ENCODE measurements at regions of chr5 and their contacts with region 1.

Region 1: DNA sequence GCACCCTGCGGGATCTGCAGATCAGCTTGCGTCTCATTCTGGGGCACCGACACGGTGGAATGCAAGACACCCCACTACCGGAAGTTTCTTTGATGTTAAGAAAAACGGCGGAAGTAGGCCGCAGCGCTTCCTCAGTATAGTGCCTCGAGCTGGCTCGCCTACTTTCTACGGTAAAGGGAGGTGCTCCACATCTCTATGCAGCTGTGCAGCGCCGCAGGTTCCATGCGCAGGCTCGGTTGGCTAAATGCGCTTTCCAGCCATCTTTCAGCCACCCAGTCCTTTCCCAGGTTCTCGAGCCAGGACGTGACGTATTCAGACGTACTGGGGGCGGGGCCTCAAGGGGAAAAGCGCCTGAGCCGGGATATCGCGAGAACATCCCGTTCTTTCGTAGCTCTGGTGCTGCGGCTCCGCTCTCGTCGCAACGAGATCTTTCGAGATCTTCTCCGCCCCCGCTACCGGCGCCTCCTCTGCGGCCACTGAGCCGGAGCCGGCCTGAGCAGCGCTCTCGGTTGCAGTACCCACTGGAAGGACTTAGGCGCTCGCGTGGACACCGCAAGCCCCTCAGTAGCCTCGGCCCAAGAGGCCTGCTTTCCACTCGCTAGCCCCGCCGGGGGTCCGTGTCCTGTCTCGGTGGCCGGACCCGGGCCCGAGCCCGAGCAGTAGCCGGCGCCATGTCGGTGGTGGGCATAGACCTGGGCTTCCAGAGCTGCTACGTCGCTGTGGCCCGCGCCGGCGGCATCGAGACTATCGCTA is at the start of gene HSPA4:
- DNase-seq: peak; percentile 99
- ATAC-seq: peak; percentile 89
- H3K4me3 Mint-ChIP-seq: peak within 1 kb of the TSS; percentile 98
- H3K27ac Mint-ChIP-seq: peak within 1 kb of the TSS; percentile 100
- H3K4me1 Mint-ChIP-seq: peaks cover 44% of the 10 kb centered on the region
- H3K27me3 Mint-ChIP-seq: no peaks in the 10 kb centered on the region
- total RNA-seq, gene HSPA4: 243 to 268 TPM

Region 2: GRCh38 chr5:132490486-132491367 is 561.0 kb before region 1 on chr5 and contains the start of gene IRF1:
- CTCF ChIA-PET with region 1: no interaction called
- POLR2A ChIA-PET with region 1: no interaction called
- intact Hi-C with region 1: loop called in 1 of 2 experiments (anchors 2 kb)
- DNase-seq: peak; percentile 99
- ATAC-seq: peak; percentile 67
- H3K4me3 Mint-ChIP-seq: peak within 1 kb of the TSS; percentile 96
- H3K27ac Mint-ChIP-seq: peak within 1 kb of the TSS; percentile 97
- H3K4me1 Mint-ChIP-seq: peaks cover 69% of the 10 kb centered on the region
- H3K27me3 Mint-ChIP-seq: no peaks in the 10 kb centered on the region
- total RNA-seq, gene IRF1: 121 to 130 TPM

Region 3: DNA sequence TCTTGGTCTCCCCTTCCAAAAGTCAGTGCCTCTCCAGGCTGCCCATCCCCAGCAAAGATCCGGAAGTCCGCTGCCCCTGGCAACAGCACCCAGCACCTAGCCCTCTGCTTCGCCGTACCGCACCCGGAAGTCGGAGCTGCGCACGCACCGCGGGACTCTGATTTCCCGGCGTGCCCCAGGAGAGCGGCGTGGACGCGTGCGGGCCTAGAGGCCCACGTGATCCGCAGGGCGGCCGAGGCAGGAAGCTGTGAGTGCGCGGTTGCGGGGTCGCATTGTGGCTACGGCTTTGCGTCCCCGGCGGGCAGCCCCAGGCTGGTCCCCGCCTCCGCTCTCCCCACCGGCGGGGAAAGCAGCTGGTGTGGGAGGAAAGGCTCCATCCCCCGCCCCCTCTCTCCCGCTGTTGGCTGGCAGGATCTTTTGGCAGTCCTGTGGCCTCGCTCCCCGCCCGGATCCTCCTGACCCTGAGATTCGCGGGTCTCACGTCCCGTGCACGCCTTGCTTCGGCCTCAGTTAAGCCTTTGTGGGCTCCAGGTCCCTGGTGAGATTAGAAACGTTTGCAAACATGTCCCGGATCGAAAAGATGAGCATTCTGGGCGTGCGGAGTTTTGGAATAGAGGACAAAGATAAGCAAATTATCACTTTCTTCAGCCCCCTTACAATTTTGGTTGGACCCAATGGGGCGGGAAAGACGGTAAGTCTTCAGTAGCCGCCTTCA is 494.8 kb before region 1 on chr5 and contains the start of gene RAD50:
- CTCF ChIA-PET with region 1: no interaction called
- POLR2A ChIA-PET with region 1: no interaction called
- intact Hi-C with region 1: loop called in 1 of 2 experiments (anchors 1 kb)
- DNase-seq: peak; percentile 96
- ATAC-seq: peak; percentile 99
- H3K4me3 Mint-ChIP-seq: peak within 1 kb of the TSS; percentile 96
- H3K27ac Mint-ChIP-seq: peak within 1 kb of the TSS; percentile 98
- H3K4me1 Mint-ChIP-seq: peaks cover 21% of the 10 kb centered on the region
- H3K27me3 Mint-ChIP-seq: no peaks in the 10 kb centered on the region
- total RNA-seq, gene RAD50: 46.0 to 51.3 TPM

Region 4: DNA sequence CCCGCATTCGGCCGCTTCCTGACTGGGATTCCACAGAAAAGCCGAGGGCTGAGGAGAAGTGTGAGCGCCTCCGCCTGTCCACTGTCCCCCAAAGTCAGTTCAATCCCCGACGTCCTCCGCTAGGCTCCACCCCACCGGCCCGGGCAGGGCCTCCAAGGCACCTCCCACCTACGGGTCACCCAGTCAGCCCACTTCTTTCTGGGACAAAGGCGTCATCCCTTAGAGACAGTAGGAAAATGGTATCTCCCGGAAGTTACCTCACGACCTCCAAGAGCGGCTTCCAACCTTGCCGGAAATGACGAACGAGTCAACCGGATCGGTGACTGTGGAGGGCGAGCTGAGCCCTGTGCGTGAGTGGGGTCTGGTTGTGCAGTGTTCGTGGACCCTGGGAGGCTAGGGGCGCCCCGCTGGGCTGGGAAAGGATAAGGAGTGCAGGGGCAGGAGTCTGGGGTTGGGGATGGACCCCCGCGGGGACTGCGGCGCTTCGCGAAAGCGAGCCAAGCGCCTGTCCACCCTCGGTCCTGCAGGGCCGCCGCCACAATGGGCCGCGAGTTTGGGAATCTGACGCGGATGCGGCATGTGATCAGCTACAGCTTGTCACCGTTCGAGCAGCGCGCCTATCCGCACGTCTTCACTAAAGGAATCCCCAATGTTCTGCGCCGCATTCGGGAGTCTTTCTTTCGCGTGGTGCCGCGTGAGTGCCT is 185.3 kb before region 1 on chr5 and contains the starts of genes GDF9 and UQCRQ:
- CTCF ChIA-PET with region 1: no interaction called
- POLR2A ChIA-PET with region 1: interaction called, 4 read pairs
- intact Hi-C with region 1: loop called (anchors 1 to 2 kb)
- DNase-seq: peak; percentile 94
- ATAC-seq: peak; percentile 99
- H3K4me3 Mint-ChIP-seq: peak within 1 kb of the TSS; percentile 99
- H3K27ac Mint-ChIP-seq: peak within 1 kb of the TSS; percentile 100
- H3K4me1 Mint-ChIP-seq: peaks cover 26% of the 10 kb centered on the region
- H3K27me3 Mint-ChIP-seq: no peaks in the 10 kb centered on the region
- total RNA-seq, gene GDF9: 0.41 to 0.69 TPM
- total RNA-seq, gene UQCRQ: 299 to 537 TPM

Region 5: GRCh38 chr5:132887283-132887682 is 164.5 kb before region 1 on chr5:
- CTCF ChIA-PET with region 1: no interaction called
- POLR2A ChIA-PET with region 1: no interaction called
- intact Hi-C with region 1: no loop called
- DNase-seq: no peak
- ATAC-seq: no peak
- H3K4me3 Mint-ChIP-seq: no peak overlapping the region
- H3K27ac Mint-ChIP-seq: no peak overlapping the region
- H3K4me1 Mint-ChIP-seq: peaks cover 5% of the 10 kb centered on the region
- H3K27me3 Mint-ChIP-seq: no peaks in the 10 kb centered on the region

Region 6: GRCh38 chr5:132916086-132916485 is 135.7 kb before region 1 on chr5:
- CTCF ChIA-PET with region 1: no interaction called
- POLR2A ChIA-PET with region 1: no interaction called
- intact Hi-C with region 1: no loop called
- DNase-seq: no peak
- ATAC-seq: no peak
- H3K4me3 Mint-ChIP-seq: no peak overlapping the region
- H3K27ac Mint-ChIP-seq: no peak overlapping the region
- H3K4me1 Mint-ChIP-seq: no peaks in the 10 kb centered on the region
- H3K27me3 Mint-ChIP-seq: no peaks in the 10 kb centered on the region

Region 7: GRCh38 chr5:133025804-133026663 is 25.7 kb before region 1 on chr5 and contains the start of gene ZCCHC10:
- CTCF ChIA-PET with region 1: interaction called, 3 read pairs
- POLR2A ChIA-PET with region 1: interaction called, 7 read pairs
- intact Hi-C with region 1: loop called (anchors 1 kb)
- DNase-seq: peak; percentile 96
- ATAC-seq: peak; percentile 100
- H3K4me3 Mint-ChIP-seq: peak within 1 kb of the TSS; percentile 94
- H3K27ac Mint-ChIP-seq: peak within 1 kb of the TSS; percentile 91
- H3K4me1 Mint-ChIP-seq: peaks cover 17% of the 10 kb centered on the region
- H3K27me3 Mint-ChIP-seq: no peaks in the 10 kb centered on the region
- total RNA-seq, gene ZCCHC10: 25.7 to 32.2 TPM

Region 8: GRCh38 chr5:134004592-134005375 is 953.0 kb after region 1 on chr5 and contains the start of gene VDAC1:
- CTCF ChIA-PET with region 1: no interaction called
- POLR2A ChIA-PET with region 1: no interaction called
- intact Hi-C with region 1: loop called in 1 of 2 experiments (anchors 2 kb)
- DNase-seq: peak; percentile 92
- ATAC-seq: peak; percentile 85
- H3K4me3 Mint-ChIP-seq: peak within 1 kb of the TSS; percentile 94
- H3K27ac Mint-ChIP-seq: peak within 1 kb of the TSS; percentile 98
- H3K4me1 Mint-ChIP-seq: peaks cover 44% of the 10 kb centered on the region
- H3K27me3 Mint-ChIP-seq: no peaks in the 10 kb centered on the region
- total RNA-seq, gene VDAC1: 482 to 486 TPM

Region 9: GRCh38 chr5:134176511-134177368 is 1125.0 kb after region 1 on chr5 and contains the start of gene SKP1:
- CTCF ChIA-PET with region 1: no interaction called
- POLR2A ChIA-PET with region 1: no interaction called
- intact Hi-C with region 1: loop called in 1 of 2 experiments (anchors 2 kb)
- DNase-seq: peak; percentile 91
- ATAC-seq: peak; percentile 85
- H3K4me3 Mint-ChIP-seq: peak within 1 kb of the TSS; percentile 98
- H3K27ac Mint-ChIP-seq: peak within 1 kb of the TSS; percentile 95
- H3K4me1 Mint-ChIP-seq: peaks cover 32% of the 10 kb centered on the region
- H3K27me3 Mint-ChIP-seq: no peaks in the 10 kb centered on the region
- total RNA-seq, gene SKP1: 218 to 265 TPM

Region 10: DNA sequence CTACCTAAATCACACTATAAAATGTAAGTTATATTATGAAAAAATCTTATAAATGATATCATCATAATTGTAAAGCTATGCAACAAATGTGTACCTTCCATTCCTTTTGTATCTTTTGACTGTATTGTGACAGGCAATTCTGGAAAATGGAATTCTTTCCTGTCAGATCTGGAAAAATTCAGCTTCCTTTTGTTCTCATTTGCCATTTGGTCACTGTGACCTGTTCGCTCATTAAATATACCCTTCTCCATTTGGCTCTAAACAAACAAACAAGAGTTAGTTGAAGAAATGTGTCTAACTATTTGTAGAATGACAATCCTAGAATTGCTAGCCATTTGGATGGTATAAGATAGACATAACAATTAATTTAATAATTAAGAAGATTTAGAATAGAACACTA is 1252.6 kb after region 1 on chr5:
- CTCF ChIA-PET with region 1: no interaction called
- POLR2A ChIA-PET with region 1: no interaction called
- intact Hi-C with region 1: no loop called
- DNase-seq: no peak
- ATAC-seq: no peak
- H3K4me3 Mint-ChIP-seq: no peak overlapping the region
- H3K27ac Mint-ChIP-seq: no peak overlapping the region
- H3K4me1 Mint-ChIP-seq: no peaks in the 10 kb centered on the region
- H3K27me3 Mint-ChIP-seq: no peaks in the 10 kb centered on the region